Naive thymus-derived CD4-positive, alpha-beta T cell (primary cell): ENCODE measurements at regions of chr19 and their contacts with region 1.

Region 1: DNA sequence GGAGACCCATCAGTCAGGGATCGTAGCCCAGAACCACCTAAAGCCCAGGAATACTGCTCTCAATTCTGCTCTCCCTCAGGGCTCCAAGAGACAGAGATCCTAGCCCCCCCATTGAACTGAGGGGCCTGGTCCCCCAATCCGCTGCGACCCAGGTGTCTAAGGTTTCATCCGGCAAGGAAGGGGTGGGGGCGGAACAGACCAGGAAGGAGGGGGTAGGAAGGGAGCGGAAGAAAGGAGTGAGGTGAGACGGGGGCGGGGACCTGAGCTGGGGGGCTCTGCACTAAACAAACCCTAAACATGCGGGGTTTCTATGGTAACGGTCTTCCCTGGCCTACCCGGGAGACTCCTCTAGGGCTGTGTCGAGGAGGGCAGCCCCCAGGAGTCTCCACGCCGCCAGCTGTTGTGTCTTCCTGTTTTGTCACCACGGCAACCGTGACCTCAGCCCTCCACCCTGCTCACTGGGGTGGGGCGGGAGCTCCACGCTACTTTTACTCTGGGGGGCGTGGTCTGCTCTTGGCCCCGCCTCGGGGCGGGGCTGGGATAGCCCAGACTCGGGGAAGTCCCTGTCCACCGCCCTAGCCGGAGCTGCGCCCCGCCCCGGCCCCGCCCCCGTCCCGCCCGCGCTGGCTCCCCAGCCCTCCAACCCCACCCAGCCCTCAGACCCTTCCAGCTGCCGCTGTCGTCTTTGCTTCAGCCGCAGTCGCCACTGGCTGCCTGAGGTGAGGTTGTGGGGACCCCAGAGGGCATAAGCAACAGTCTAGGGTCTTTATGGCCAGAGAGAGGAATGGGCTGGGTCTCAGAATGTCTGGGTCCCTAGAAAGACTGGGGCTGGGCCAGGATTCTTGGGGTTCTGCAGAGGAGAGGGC is at the start of gene MYADM:
- DNase-seq: peak; percentile 99 to 100 (median 100)
- ATAC-seq: peak; percentile 80
- H3K4me3 ChIP-seq: peak within 1 kb of the TSS; percentile 90
- H3K4me3 Mint-ChIP-seq: peak within 1 kb of the TSS; percentile 92 to 100 (median 97)
- H3K27ac ChIP-seq: peak within 1 kb of the TSS; percentile 99
- H3K27ac Mint-ChIP-seq: peak within 1 kb of the TSS; percentile 97 to 100 (median 99)
- H3K4me1 ChIP-seq: peaks cover 17 to 26% of the 10 kb centered on the region in 2 donors
- H3K4me1 Mint-ChIP-seq: peaks cover 15 to 45% (median 34%) of the 10 kb centered on the region in 7 donors
- H3K27me3 ChIP-seq: no peaks in the 10 kb centered on the region
- H3K27me3 Mint-ChIP-seq: peaks cover 0 to 5% (median 0%) of the 10 kb centered on the region in 5 donors
- total RNA-seq, gene MYADM: 51.5 to 524 (median 116) TPM

Region 2: DNA sequence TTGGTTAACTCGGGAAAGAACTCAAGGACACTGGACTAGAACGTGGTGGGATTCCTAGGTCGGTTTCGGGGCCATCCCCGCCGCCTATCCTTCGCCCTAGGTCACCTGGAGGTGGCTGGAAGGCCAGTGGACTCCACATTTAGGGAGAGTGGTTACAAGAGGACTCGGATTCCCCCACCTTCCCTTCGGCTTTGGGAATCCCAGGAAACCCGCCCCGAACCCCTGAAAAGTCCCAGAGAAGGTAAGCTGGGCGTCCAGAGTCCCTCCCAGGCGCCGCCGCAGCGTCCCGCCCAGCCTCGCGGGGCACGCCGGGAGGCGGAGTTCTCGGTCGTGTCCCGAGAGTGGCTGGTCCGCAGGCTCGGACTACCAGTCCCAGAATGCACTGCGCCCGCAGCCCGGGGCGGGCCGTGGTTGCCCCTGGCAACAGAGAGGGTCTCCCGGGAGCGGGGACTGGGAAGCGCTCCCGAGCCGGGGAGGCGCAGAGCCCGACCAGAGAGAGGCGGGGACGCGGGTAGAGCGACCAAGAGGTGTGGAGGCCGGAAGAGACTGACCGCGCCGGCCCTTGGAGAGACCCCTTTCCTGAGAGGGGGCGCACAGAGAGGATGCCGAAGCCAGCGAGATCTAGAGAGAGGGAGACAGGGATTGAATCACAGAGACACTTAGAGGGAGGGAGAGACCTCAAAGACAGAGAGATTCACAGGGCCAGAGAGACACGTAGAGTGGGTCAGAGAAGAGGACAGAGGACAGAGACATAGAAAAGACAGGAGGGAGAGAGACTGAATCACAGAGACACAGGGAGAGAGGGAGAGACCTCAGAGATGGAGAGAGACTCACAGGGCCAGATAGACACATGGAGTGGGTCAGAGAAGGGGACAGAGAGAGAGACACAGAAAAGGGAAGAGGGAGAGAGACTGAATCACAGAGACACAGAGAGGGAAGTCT is 12.0 kb after region 1 on chr19:
- CTCF ChIA-PET with region 1: interaction called, 14 read pairs
- POLR2A ChIA-PET with region 1: interaction called, 66 read pairs
- intact Hi-C with region 1: loop called (anchors 1 kb)
- DNase-seq: peak; percentile 66 to 88 (median 78)
- ATAC-seq: peak; percentile 83
- H3K4me3 ChIP-seq: peak overlapping the region; percentile 63
- H3K4me3 Mint-ChIP-seq: no peak overlapping the region
- H3K27ac ChIP-seq: peak overlapping the region; percentile 47
- H3K27ac Mint-ChIP-seq: peak overlapping the region in 6 of 9 donors; percentile 56 to 83 (median 68)
- H3K4me1 ChIP-seq: peaks cover 38 to 63% of the 10 kb centered on the region in 2 donors
- H3K4me1 Mint-ChIP-seq: peaks cover 30 to 62% (median 44%) of the 10 kb centered on the region in 7 donors
- H3K27me3 ChIP-seq: peaks cover 0 to 25% of the 10 kb centered on the region in 2 donors
- H3K27me3 Mint-ChIP-seq: peaks cover 10 to 19% (median 17%) of the 10 kb centered on the region in 5 donors

Region 3: DNA sequence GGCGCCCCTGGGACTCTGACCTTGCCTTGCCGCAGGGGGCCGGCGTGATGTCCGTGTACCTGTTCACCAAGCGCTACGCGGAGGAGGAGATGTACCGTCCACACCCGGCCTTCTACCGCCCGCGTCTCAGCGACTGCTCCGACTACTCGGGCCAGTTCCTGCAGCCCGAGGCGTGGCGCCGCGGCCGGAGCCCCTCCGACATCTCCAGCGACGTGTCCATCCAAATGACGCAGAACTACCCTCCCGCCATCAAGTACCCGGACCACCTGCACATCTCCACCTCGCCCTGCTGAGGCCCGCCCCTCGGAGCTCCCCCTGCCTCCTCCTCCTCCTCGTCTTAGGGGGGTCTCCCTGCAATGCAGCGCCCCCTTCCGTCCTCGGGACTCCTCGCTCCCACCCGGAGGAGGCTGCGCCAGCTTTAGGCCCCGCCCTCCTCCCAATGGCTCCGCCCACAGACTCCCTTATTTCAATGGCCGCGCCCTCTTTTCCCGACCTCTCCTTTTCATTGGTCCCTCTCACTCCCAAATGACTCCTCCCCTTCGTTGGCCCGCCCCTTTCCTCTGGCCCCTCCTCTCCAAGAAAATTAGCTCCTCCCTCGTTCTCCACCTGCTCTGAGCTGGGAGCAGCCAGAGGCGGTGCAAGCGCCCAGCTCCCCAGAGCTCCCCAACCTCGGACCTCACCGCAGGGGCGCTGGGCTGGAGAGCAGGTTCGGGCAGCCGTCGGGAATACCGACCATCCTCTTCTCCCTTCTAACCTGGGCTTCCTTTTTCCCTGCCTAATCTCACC is 74.7 kb after region 1 on chr19:
- CTCF ChIA-PET with region 1: no interaction called
- POLR2A ChIA-PET with region 1: no interaction called
- intact Hi-C with region 1: no loop called
- DNase-seq: no peak
- ATAC-seq: no peak
- H3K4me3 ChIP-seq: no peak overlapping the region
- H3K4me3 Mint-ChIP-seq: peak overlapping the region in 1 of 10 donors; percentile 25
- H3K27ac ChIP-seq: no peak overlapping the region
- H3K27ac Mint-ChIP-seq: no peak overlapping the region
- H3K4me1 ChIP-seq: no peaks in the 10 kb centered on the region
- H3K4me1 Mint-ChIP-seq: peaks cover 0 to 7% (median 0%) of the 10 kb centered on the region in 7 donors
- H3K27me3 ChIP-seq: peaks cover 0 to 5% of the 10 kb centered on the region in 2 donors
- H3K27me3 Mint-ChIP-seq: peaks cover 45 to 74% (median 71%) of the 10 kb centered on the region in 5 donors

Region 4: GRCh38 chr19:54102421-54103169 is 235.1 kb after region 1 on chr19 and contains the start of gene NDUFA3:
- CTCF ChIA-PET with region 1: no interaction called
- POLR2A ChIA-PET with region 1: no interaction called
- intact Hi-C with region 1: loop called in 1 of 2 experiments (anchors 2 kb)
- DNase-seq: peak; percentile 95 to 99 (median 97)
- ATAC-seq: peak; percentile 99
- H3K4me3 ChIP-seq: peak within 1 kb of the TSS; percentile 72
- H3K4me3 Mint-ChIP-seq: peak within 1 kb of the TSS; percentile 87 to 99 (median 98)
- H3K27ac ChIP-seq: peak within 1 kb of the TSS; percentile 77
- H3K27ac Mint-ChIP-seq: peak within 1 kb of the TSS; percentile 85 to 98 (median 94)
- H3K4me1 ChIP-seq: peaks cover 0 to 6% of the 10 kb centered on the region in 2 donors
- H3K4me1 Mint-ChIP-seq: peaks cover 5 to 40% (median 24%) of the 10 kb centered on the region in 7 donors
- H3K27me3 ChIP-seq: no peaks in the 10 kb centered on the region
- H3K27me3 Mint-ChIP-seq: peaks cover 0 to 6% (median 0%) of the 10 kb centered on the region in 5 donors
- total RNA-seq, gene NDUFA3: 64.4 to 127 (median 117) TPM

Region 5: DNA sequence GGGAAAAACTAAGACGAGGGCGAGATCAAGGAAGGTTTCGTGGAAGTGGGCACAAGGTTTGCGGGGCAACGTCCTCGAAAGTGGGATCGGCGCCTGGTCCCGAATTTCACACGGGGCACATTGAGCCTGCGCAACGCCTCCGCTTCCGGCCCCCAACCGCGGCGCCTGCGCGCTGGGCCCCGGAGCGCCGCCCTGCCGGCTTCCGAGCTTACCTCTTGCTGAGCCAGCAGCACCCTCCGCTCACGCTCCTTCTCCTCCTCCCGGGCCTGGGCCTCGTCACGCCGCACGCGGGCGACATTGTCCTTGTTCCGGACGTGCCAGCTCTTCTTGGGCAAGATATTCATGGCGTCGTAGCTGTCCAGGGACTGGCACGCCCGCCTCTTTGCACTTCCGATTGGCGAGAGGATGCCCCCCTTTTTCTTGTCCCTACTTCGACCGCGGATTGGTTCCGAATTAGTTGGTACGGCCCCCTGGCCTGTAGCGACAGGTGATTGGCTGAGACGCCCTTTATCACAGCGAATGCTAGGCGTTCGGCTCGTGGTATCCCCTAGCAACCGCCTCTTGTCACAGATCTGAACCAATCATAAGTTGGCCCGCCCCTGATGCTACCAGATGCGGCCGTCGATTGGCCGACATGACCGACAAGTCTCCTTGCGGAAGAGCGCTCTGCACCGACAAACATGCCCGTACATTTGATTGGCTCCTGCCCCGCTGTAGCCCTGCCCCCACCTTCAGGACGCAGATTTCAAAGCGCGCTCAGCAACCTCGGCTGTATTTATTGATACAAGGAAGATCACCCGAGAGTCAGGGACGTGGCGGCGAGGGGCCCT is 292.1 kb after region 1 on chr19 and contains the start of gene LENG1:
- CTCF ChIA-PET with region 1: no interaction called
- POLR2A ChIA-PET with region 1: interaction called, 3 read pairs
- intact Hi-C with region 1: loop called (anchors 1 kb)
- DNase-seq: peak; percentile 80 to 100 (median 99)
- ATAC-seq: peak; percentile 91
- H3K4me3 ChIP-seq: peak within 1 kb of the TSS; percentile 78
- H3K4me3 Mint-ChIP-seq: peak within 1 kb of the TSS; percentile 91 to 100 (median 98)
- H3K27ac ChIP-seq: peak within 1 kb of the TSS; percentile 87
- H3K27ac Mint-ChIP-seq: peak within 1 kb of the TSS; percentile 95 to 100 (median 99)
- H3K4me1 ChIP-seq: peaks cover 35 to 53% of the 10 kb centered on the region in 2 donors
- H3K4me1 Mint-ChIP-seq: peaks cover 47 to 88% (median 65%) of the 10 kb centered on the region in 7 donors
- H3K27me3 ChIP-seq: no peaks in the 10 kb centered on the region
- H3K27me3 Mint-ChIP-seq: no peaks in the 10 kb centered on the region
- total RNA-seq, gene LENG1: 7.1 to 20.4 (median 11.8) TPM

Region 6: DNA sequence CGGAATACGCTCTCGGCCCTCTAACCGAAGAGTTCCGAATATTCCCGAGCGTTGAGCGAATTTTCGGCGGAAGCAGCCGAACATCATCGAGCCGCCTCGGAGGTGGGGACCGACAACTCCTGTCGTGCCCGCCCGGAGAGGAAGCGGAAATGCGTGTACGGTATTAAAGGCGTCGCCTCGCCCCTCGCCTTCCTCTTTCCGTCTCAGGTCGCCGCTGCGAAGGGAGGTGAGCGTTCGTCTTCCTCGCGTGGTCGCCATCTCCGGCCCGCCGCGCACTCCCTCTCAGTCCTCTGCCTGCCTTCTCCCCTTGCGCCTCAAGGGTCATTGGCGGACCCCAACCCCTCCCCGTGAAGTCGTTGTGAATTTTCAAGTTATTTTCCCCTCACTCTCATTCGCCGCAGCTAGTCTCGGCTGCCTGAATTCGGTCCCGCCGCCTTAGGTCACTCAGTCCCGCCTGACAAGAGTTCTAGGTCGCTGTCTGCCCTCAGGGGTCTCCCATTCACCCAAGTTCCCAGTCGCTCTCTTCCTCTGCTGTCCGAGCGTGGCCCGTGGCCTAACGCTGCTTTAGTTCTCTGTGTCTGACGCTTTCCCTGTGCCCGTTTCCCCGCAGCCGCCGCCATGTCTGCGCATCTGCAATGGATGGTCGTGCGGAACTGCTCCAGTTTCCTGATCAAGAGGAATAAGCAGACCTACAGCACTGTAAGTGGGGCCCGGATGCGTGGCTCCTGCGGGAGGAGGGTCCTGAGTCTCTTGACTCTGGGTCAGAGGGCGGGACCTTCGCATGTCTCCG is 1518.5 kb after region 1 on chr19 and contains the start of gene RPL28:
- CTCF ChIA-PET with region 1: no interaction called
- POLR2A ChIA-PET with region 1: no interaction called
- intact Hi-C with region 1: loop called in 1 of 2 experiments (anchors 5 kb)
- DNase-seq: peak; percentile 92 to 99 (median 99)
- ATAC-seq: peak; percentile 89
- H3K4me3 ChIP-seq: peak within 1 kb of the TSS; percentile 92
- H3K4me3 Mint-ChIP-seq: peak within 1 kb of the TSS; percentile 94 to 100 (median 100)
- H3K27ac ChIP-seq: peak within 1 kb of the TSS; percentile 91
- H3K27ac Mint-ChIP-seq: peak within 1 kb of the TSS; percentile 91 to 100 (median 99)
- H3K4me1 ChIP-seq: peaks cover 45 to 53% of the 10 kb centered on the region in 2 donors
- H3K4me1 Mint-ChIP-seq: peaks cover 41 to 79% (median 70%) of the 10 kb centered on the region in 7 donors
- H3K27me3 ChIP-seq: no peaks in the 10 kb centered on the region
- H3K27me3 Mint-ChIP-seq: peaks cover 0 to 3% (median 0%) of the 10 kb centered on the region in 5 donors
- total RNA-seq, gene RPL28: 2,549 to 3,799 (median 3,242) TPM